ENCODE measurements at regions of chr18 and their contacts with region 1.

Region 1: GRCh38 chr18:38695559-38696280 is 1130.1 kb upstream of the CELF4 start:
- DNase-seq: peak; percentile 78
- H3K4me3 ChIP-seq: no peak overlapping the region
- H3K27ac ChIP-seq: no peak overlapping the region
- H3K4me1 ChIP-seq: peaks cover 12% of the 10 kb centered on the region
- H3K27me3 ChIP-seq: no peaks in the 10 kb centered on the region
- CTCF ChIP-seq: no peak

Region 2: DNA sequence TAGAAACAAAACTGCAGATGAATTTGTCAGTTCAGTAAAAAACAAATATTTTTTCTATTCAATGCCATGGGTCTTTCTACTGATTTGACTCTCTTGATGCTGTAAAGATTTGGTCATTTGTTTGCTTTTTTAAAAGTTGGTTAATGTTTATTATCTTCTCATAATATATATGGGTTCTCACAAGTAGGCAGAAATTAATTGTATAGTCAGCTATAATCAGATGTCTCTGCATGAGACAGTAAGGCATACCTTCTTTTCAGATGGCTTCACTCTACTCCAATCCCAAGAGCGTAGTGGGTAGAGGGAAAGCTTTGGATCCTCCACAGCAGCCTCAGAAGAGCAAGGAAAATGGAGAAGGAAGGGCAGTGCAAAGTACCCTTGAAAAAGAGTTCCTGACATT is 72.8 kb after region 1 on chr18:
- CTCF ChIA-PET with region 1: no interaction called
- dilution Hi-C with region 1: no loop called
- in situ Hi-C with region 1: no loop called
- intact Hi-C with region 1: loop called (anchors 10 kb)
- DNase-seq: no peak
- H3K4me3 ChIP-seq: no peak overlapping the region
- H3K27ac ChIP-seq: no peak overlapping the region
- H3K4me1 ChIP-seq: no peaks in the 10 kb centered on the region
- H3K27me3 ChIP-seq: no peaks in the 10 kb centered on the region
- CTCF ChIP-seq: no peak

Measured in mammary epithelial cell (primary cell).